GM10248 (cell line): ENCODE measurements at regions of chr13 and their contacts with region 1.

Region 1: GRCh38 chr13:35789335-35790165 is 313.1 kb upstream of the MAB21L1 start:
- DNase-seq: peak; percentile 18
- CTCF ChIP-seq: peak; percentile 45

Region 2: DNA sequence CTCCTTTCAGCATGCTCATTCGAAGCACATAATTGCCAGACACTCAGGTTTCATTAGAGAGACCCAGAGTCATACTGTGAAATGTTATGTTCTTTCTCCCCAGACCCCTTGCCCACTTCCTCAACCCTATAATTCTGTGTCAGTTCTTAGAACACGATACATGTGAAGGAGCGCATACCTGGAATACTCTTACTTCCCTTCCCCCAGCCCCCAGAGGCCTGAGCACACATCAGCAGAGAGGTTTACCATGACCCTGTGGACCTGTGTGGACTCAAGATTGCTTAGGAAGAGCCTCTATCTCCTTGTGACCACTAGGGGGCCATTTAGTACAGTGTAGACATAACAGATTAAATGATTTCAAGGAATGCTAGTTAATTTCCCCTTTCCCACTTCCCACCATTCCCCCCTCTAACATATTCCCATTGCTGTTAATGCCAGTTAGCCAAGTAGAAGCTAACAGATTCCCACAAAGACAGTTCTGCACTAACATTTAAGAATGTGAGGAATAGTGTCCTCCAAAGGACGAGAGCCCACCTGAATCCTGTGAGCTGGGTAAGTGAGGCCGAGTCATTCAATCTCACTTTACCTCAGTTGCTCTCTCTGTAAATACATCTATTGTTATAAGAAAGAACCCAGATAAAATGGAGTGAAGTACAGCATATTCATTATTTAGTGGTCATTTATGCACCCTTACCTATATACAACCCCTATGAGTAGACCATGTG is 158.8 kb before region 1 on chr13:
- CTCF ChIA-PET with region 1: interaction called, 13 read pairs
- POLR2A ChIA-PET with region 1: no interaction called
- DNase-seq: peak; percentile 17
- CTCF ChIP-seq: peak; percentile 52